Ovary (tissue), 10 donors: ENCODE measurements at regions of chr12 and their contacts with region 1.

Region 1: DNA sequence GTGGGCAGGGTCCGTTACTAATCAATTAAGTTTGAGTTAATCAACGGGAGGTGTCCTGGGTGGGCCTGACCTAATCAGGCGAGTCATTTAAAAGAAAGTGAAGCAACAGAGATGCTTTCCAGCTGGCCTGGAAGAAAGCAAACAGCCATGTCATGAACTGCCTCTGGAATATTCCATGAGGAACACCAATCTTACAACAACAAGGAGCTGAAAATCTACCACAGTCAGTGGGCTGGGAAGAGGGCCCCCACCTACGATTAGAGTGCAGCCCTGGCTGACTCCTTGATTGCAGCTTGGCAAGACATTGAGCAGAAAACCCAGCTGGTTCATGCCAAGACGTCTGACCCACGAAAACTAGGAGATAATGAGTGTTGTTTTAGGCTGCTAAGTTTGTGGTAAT is 56.2 kb downstream of the SSPN start:
- DNase-seq: peak; percentile 53 to 72 (median 57)
- H3K4me3 ChIP-seq: no peak overlapping the region
- H3K27ac ChIP-seq: no peak overlapping the region
- H3K4me1 ChIP-seq: no peaks in the 10 kb centered on the region
- H3K27me3 ChIP-seq: no peaks in the 10 kb centered on the region
- CTCF ChIP-seq: no peak
- EP300 ChIP-seq: no peak
- POLR2A ChIP-seq: no peak

Region 2: GRCh38 chr12:25427337-25428249 is 824.0 kb before region 1 on chr12:
- intact Hi-C with region 1: loop called in 1 of 4 experiments (anchors 5 kb)
- DNase-seq: no peak
- H3K4me3 ChIP-seq: no peak overlapping the region
- H3K27ac ChIP-seq: no peak overlapping the region
- H3K4me1 ChIP-seq: no peaks in the 10 kb centered on the region
- H3K27me3 ChIP-seq: no peaks in the 10 kb centered on the region
- CTCF ChIP-seq: no peak
- EP300 ChIP-seq: no peak
- POLR2A ChIP-seq: no peak

Region 3: GRCh38 chr12:26406391-26406790 is 154.8 kb after region 1 on chr12:
- intact Hi-C with region 1: no loop called
- DNase-seq: peak in 3 of 5 donors; percentile 24 to 36 (median 25)
- H3K4me3 ChIP-seq: no peak overlapping the region
- H3K27ac ChIP-seq: no peak overlapping the region
- H3K4me1 ChIP-seq: no peaks in the 10 kb centered on the region
- H3K27me3 ChIP-seq: no peaks in the 10 kb centered on the region
- CTCF ChIP-seq: no peak
- EP300 ChIP-seq: no peak
- POLR2A ChIP-seq: no peak